ENCODE measurements at regions of chr2 and their contacts with region 1.

Region 1: DNA sequence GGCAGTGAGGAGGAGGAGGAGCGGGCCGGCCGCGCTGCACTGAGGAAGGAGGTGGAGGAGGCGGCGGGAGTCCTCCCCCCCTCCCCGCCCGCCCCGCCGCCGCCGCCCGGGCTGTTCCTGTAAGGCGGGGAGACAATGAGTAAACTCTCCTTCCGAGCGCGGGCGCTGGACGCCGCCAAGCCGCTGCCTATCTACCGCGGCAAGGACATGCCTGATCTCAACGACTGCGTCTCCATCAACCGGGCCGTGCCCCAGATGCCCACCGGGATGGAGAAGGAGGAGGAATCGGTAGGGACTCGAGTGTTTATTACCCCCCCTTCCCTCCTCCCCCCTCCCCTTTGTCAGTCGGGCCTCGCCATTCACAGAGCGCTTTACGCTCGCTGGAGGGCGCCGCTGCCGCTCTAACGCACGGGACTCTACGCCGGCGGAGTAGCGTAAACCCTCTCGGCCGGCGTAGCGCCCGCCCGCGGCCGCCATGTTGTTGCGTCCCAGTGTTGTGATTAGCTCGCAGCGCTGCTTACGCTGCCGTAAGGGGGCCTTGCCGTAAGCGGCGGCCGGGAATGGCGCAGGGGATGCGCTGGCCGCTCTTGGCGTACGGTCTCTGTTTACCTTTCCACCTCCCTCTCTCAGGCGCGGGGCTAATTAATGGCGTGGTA is 460 bp downstream of the EPC2 start:
- DNase-seq: peak; percentile 87 to 89
- ATAC-seq: peak; percentile 84 to 86
- H3K4me3 ChIP-seq: peak overlapping the region; percentile 80 to 90 (median 88)
- H3K27ac ChIP-seq: peak overlapping the region; percentile 97 to 100 (median 98)
- H3K4me1 ChIP-seq: peaks cover 33 to 40% of the 10 kb centered on the region in 2 donors
- H3K27me3 ChIP-seq: no peaks in the 10 kb centered on the region
- CTCF ChIP-seq: peak in 3 of 5 experiments; percentile 21 to 54 (median 37)
- POLR2A ChIP-seq: no peak

Region 2: DNA sequence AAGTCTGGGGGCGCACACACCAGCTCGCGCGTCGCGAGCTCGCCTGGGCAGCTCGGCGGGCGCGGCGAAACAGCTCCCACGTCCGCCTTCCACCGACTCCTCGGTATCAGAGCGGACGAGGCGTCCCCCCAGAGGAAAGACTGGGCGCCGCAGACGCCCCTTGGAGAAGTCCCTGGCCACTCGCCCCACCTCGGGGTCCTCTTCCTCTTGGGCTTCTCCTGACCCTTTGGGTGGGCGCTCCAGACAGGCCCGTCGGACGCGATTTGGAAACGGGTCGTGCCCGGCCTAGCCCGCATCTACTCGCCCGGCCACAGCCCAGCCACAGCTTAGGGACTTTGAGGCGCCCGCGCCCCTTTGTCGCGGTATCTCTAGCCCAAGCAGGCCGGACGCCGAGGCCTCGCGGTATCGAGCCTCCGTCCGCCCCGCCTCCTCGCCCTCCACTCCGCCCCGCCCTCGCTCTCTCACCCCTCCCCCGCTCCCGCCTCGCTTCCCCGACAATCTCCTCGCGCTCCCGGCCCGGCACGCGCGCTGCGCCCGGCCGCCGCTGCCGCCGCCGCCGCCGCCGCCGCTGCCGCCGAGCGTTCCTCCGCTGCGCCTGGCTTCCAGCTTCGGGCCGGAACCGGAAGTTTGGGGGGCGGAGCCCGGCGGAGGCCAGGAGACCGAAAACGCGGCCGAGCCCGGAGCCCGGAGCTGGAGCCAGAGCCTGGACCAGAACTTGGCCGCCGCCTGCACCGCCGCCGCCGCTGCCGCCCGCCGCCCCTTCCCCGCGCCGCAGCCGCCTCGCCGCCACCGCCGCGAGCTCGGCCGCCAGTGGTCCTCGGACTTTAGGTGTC is 800.9 kb before region 1 on chr2:
- in situ Hi-C with region 1: no loop called
- intact Hi-C with region 1: loop called (anchors 5 kb)
- DNase-seq: peak; percentile 83 to 85
- ATAC-seq: peak; percentile 90 to 92
- H3K4me3 ChIP-seq: peak overlapping the region; percentile 77 to 91 (median 86)
- H3K27ac ChIP-seq: peak overlapping the region; percentile 89 to 99 (median 96)
- H3K4me1 ChIP-seq: peaks cover 37 to 43% of the 10 kb centered on the region in 2 donors
- H3K27me3 ChIP-seq: no peaks in the 10 kb centered on the region
- CTCF ChIP-seq: peak in 3 of 5 experiments; percentile 10 to 31 (median 27)
- POLR2A ChIP-seq: peak; percentile 68 to 73

Region 3: GRCh38 chr2:148020111-148021058 is 624.6 kb before region 1 on chr2 and contains the start of gene ORC4:
- in situ Hi-C with region 1: no loop called
- intact Hi-C with region 1: loop called (anchors 2 kb)
- DNase-seq: peak; percentile 99
- ATAC-seq: peak; percentile 96 to 98
- H3K4me3 ChIP-seq: peak within 1 kb of the TSS; percentile 84 to 98 (median 90)
- H3K27ac ChIP-seq: peak within 1 kb of the TSS; percentile 95 to 99 (median 98)
- H3K4me1 ChIP-seq: peaks cover 40 to 49% of the 10 kb centered on the region in 2 donors
- H3K27me3 ChIP-seq: no peaks in the 10 kb centered on the region
- CTCF ChIP-seq: peak in 4 of 5 experiments; percentile 12 to 53 (median 34)
- POLR2A ChIP-seq: peak; percentile 55 to 62
- total RNA-seq, gene ORC4: 34.8 to 51.8 (median 43.1) TPM

Region 4: DNA sequence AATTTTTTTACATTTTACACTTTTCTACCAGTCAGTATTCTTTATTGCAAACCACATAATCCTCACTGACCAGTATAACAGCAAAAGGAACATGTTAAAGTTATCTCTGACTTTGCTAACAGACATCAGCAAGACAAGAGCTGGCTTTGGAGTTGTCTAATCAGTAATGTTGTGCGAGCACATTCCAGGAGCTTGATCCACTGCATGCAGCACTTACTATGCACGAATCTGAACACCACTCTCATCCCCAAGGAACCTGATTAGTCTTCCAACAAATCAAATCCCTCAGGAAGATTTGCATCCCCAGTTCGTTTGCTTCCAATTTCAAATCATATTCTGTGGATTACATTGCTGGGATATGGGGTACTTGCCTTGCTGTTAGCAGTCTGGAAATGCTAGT is 269.8 kb before region 1 on chr2:
- in situ Hi-C with region 1: no loop called
- intact Hi-C with region 1: no loop called
- DNase-seq: no peak
- ATAC-seq: no peak
- H3K4me3 ChIP-seq: no peak overlapping the region
- H3K27ac ChIP-seq: no peak overlapping the region
- H3K4me1 ChIP-seq: no peaks in the 10 kb centered on the region
- H3K27me3 ChIP-seq: no peaks in the 10 kb centered on the region
- CTCF ChIP-seq: no peak
- POLR2A ChIP-seq: no peak

Region 5: GRCh38 chr2:148720501-148721001 is 75.5 kb after region 1 on chr2:
- in situ Hi-C with region 1: no loop called
- intact Hi-C with region 1: loop called (anchors 2 kb)
- DNase-seq: peak; percentile 9 to 23
- ATAC-seq: peak; percentile 52 to 80
- H3K4me3 ChIP-seq: peak overlapping the region; percentile 22 to 53 (median 32)
- H3K27ac ChIP-seq: peak overlapping the region; percentile 6 to 29 (median 16)
- H3K4me1 ChIP-seq: peaks cover 34 to 45% of the 10 kb centered on the region in 2 donors
- H3K27me3 ChIP-seq: no peaks in the 10 kb centered on the region
- CTCF ChIP-seq: no peak
- POLR2A ChIP-seq: no peak

Region 6: DNA sequence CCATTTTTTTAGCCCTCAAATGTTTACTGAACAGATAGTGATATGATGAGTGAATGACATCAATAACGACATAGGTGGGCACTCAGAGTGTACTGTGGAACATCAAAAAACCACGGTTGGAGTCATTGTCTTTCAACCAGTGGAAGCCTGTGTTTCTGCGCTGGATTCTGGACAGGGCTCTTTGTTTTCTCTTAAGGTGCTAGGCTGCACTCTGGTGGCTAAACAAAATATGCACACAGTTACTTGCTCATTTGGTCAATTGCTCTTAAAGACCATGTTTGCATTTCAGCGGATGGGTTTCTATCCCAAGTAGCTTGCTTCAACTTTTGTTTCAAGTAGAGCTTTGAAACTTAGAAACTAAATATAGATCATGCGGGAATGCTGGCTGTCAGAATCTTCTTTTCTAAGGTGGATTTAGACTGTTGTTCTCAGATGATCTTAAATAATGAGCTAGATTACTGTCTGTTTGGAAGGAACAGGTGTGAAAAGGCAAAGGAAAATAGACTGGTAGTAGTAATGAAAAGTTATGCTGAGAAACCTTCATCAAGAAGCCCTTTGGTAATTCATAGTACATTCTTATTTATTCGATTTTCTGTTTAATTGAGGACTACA is 345.0 kb after region 1 on chr2:
- in situ Hi-C with region 1: no loop called
- intact Hi-C with region 1: loop called (anchors 10 kb)
- DNase-seq: peak; percentile 26 to 30
- ATAC-seq: peak; percentile 68 to 73
- H3K4me3 ChIP-seq: no peak overlapping the region
- H3K27ac ChIP-seq: no peak overlapping the region
- H3K4me1 ChIP-seq: no peaks in the 10 kb centered on the region
- H3K27me3 ChIP-seq: no peaks in the 10 kb centered on the region
- CTCF ChIP-seq: peak; percentile 33 to 62 (median 61)
- POLR2A ChIP-seq: no peak

Region 7: GRCh38 chr2:149587220-149587949 is 942.4 kb after region 1 on chr2 and contains the start of gene MMADHC:
- in situ Hi-C with region 1: no loop called
- intact Hi-C with region 1: loop called (anchors 10 kb)
- DNase-seq: peak; percentile 93 to 96
- ATAC-seq: peak; percentile 96 to 98
- H3K4me3 ChIP-seq: peak within 1 kb of the TSS; percentile 75 to 93 (median 92)
- H3K27ac ChIP-seq: peak within 1 kb of the TSS; percentile 92 to 98 (median 97)
- H3K4me1 ChIP-seq: peaks cover 25 to 47% of the 10 kb centered on the region in 2 donors
- H3K27me3 ChIP-seq: no peaks in the 10 kb centered on the region
- CTCF ChIP-seq: no peak
- POLR2A ChIP-seq: peak; percentile 80 to 87
- total RNA-seq, gene MMADHC: 140 to 205 (median 169) TPM